HCT116 (cell line): ENCODE measurements at regions of chr2 and their contacts with region 1.

Region 1: DNA sequence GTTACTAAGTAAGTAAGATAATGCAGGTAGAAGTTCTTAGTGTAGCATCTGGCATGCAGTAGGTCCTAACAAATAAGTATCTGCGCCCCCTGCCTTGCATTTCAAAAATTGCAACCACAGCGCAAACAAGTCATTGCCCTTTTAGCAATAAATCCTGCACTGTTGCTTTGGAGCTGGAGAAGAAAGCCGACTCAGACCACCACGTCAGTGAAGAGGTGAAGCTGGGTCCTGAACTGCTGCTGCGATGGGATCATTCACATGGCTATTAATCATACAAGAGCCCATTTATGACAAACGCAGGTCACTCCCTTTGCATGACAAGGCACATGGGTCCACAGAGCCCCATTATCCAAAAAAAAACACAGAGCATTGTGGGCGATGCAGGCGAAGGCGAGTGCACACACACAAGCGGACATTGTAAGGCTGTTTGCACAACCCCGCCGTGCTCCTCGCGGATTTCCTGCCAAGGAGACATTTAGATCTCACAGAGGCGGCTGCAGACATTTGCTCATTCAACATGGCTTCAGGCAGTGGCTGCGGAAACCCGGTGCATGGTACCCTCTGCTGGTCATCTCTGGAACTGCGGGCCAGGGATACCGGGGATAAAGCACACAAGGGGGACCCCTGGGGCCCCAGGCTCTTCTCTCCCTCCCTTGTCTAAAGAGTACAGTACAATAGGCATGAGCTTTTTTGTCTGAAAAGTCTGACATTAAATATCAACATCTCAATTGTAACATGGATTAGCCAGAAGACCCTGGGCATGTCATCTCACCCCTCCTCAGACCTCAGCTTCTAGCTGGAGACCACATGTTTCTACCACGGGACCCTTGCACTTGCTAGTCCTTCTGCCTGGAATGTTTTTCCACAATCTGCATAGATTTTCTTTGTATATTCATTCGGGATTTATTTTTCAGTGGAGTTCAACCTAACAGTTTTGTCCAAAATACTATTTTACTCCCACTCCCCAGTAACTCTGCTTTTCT is 56.7 kb downstream of the CYRIA start:
- DNase-seq: peak; percentile 32
- ATAC-seq: peak; percentile 89
- H3K4me3 ChIP-seq: peak overlapping the region; percentile 20 to 39
- H3K27ac ChIP-seq: no peak overlapping the region
- H3K4me1 ChIP-seq: peaks cover 0 to 5% of the 10 kb centered on the region in 2 experiments; a peak in 2 of 4 replicates
- H3K27me3 ChIP-seq: peaks cover 23% of the 10 kb centered on the region; the same call in 1 of the 2 replicates
- CTCF ChIP-seq: peak; percentile 79 to 97 (median 89)
- POLR2A ChIP-seq: no peak
- RAD21 ChIP-seq: peak; percentile 73

Region 2: DNA sequence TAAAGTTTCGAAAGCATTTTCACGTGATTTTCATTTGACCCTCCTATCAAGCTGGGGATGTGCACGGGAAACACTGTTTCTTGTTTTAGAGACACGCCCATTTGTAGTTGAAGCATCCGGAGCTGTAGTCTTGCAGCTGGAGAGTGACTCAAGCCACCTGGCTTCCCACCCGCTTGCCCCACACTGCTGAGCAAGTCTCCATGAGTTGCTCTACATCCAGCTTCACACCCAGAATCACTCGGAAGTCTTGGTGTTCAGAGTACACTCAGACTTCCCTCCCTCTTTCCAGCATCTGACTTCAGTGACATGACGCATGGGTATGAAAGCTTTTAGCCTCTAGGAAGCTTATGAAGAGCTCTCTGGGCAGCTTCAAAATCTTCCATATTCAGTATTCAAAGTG is 1310.2 kb before region 1 on chr2:
- CTCF ChIA-PET with region 1: no interaction called
- POLR2A ChIA-PET with region 1: no interaction called
- RAD21 ChIA-PET with region 1: no interaction called
- intact Hi-C with region 1: no loop called
- DNase-seq: no peak
- ATAC-seq: no peak
- H3K4me3 ChIP-seq: no peak overlapping the region
- H3K27ac ChIP-seq: no peak overlapping the region
- H3K4me1 ChIP-seq: no peaks in the 10 kb centered on the region
- H3K27me3 ChIP-seq: no peaks in the 10 kb centered on the region
- CTCF ChIP-seq: no peak
- POLR2A ChIP-seq: no peak
- RAD21 ChIP-seq: no peak

Region 3: GRCh38 chr2:15939854-15940660 is 668.9 kb before region 1 on chr2 and contains the start of gene MYCN:
- CTCF ChIA-PET with region 1: interaction called, 11 read pairs
- POLR2A ChIA-PET with region 1: no interaction called
- RAD21 ChIA-PET with region 1: no interaction called
- intact Hi-C with region 1: loop called (anchors 1 kb)
- DNase-seq: no peak
- ATAC-seq: peak; percentile 60
- H3K4me3 ChIP-seq: peak within 1 kb of the TSS; percentile 21 to 42
- H3K27ac ChIP-seq: no peak within 1 kb of the TSS
- H3K4me1 ChIP-seq: peaks cover 0 to 9% of the 10 kb centered on the region in 2 experiments; a peak in 3 of 4 replicates
- H3K27me3 ChIP-seq: peaks cover 13% of the 10 kb centered on the region; the same call in 1 of the 2 replicates
- CTCF ChIP-seq: peak in 1 of 3 experiments; percentile 84; a peak in 4 of 6 replicates
- POLR2A ChIP-seq: no peak
- RAD21 ChIP-seq: peak; percentile 89
- total RNA-seq, gene MYCN: not detected

Region 4: DNA sequence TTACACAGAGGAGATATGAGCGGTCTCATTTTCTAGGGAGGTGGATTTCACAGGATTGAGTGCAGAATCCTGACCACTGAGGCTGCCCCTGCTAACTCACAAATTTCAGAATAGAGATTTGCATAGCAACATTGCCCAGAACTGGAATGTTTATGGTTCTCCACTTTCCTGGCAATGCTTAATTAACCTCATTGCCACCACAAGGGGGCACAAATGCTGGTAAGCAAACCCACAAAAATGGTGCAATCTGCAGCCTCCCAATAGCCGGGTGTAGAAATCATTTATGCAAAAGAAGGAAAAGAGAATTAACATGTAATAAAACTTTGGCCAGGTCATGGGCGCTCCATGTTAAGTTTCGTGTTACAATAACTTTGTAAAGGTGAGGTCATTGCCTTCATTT is 55.7 kb before region 1 on chr2:
- CTCF ChIA-PET with region 1: interaction called, 3 read pairs
- POLR2A ChIA-PET with region 1: no interaction called
- RAD21 ChIA-PET with region 1: no interaction called
- intact Hi-C with region 1: loop called (anchors 2 kb)
- DNase-seq: peak; percentile 32
- ATAC-seq: peak; percentile 60
- H3K4me3 ChIP-seq: no peak overlapping the region
- H3K27ac ChIP-seq: no peak overlapping the region
- H3K4me1 ChIP-seq: no peaks in the 10 kb centered on the region
- H3K27me3 ChIP-seq: peaks cover 5% of the 10 kb centered on the region; the same call in 1 of the 2 replicates
- CTCF ChIP-seq: peak; percentile 52 to 71 (median 66); a peak in 5 of 6 replicates
- POLR2A ChIP-seq: no peak
- RAD21 ChIP-seq: peak; percentile 43; the same call in 1 of the 2 replicates

Region 5: GRCh38 chr2:16756831-16757644 is 148.1 kb after region 1 on chr2:
- CTCF ChIA-PET with region 1: interaction called, 85 read pairs
- POLR2A ChIA-PET with region 1: interaction called, 3 read pairs
- RAD21 ChIA-PET with region 1: interaction called, 5 to 12 read pairs
- intact Hi-C with region 1: loop called (anchors 1 kb)
- DNase-seq: peak; percentile 37
- ATAC-seq: peak; percentile 96
- H3K4me3 ChIP-seq: no peak overlapping the region
- H3K27ac ChIP-seq: no peak overlapping the region
- H3K4me1 ChIP-seq: no peaks in the 10 kb centered on the region
- H3K27me3 ChIP-seq: peaks cover 17% of the 10 kb centered on the region
- CTCF ChIP-seq: peak; percentile 70 to 95 (median 84)
- POLR2A ChIP-seq: no peak
- RAD21 ChIP-seq: peak; percentile 92